A549 (cell line): ENCODE measurements at regions of chr1 and their contacts with region 1.

Region 1: DNA sequence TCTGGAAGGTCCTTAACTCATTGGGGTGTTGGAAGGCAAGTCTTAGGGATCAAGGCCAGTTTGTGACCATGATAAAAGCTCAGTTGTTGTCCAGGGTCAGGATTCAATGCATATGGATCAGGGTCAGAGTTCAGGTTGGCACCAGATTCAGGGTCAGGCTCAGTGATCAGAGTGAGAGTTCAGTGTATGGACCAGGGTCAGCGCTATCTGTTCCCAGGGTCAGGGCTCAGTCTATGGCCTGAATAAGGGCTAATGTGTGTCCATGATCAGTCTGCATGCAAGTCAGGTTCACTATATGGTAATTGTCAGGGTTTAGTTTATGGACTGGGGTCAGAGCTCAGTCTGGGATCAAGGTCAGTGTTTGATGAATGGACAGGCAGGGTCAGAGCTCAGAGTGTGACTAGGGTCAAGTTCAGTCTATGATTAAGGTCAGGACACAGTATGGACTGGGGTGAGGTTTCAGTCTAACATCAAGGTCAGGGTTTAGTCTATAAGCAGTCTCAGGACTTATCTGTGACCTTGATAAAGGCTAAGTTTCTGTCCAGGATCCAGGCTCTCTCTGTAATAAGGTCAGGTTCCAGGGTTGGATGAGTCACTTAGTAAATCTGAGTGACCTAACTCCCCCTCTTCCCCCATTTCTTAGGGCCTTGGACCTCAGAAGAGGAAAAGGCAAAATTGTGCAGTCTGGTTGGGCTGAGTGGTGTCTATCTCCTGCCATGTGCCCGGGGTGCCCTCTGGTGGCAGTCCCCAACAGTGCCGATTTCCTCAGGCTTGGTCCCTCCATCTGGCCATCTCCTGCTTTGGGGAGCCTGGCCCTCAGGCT is 23.8 kb downstream of the KNCN start:
- DNase-seq: peak; percentile 64 to 69
- ATAC-seq: peak; percentile 78 to 91
- H3K4me3 ChIP-seq: no peak overlapping the region
- H3K27ac ChIP-seq: peak overlapping the region in 1 of 2 experiments; percentile 68; a peak in 3 of 6 replicates
- H3K4me1 ChIP-seq: peaks cover 32% of the 10 kb centered on the region
- CTCF ChIP-seq: peak; percentile 85
- EP300 ChIP-seq: no peak
- POLR2A ChIP-seq: no peak
- RAD21 ChIP-seq: peak; percentile 97 to 98

Region 2: GRCh38 chr1:46442317-46443161 is 85.1 kb before region 1 on chr1:
- CTCF ChIA-PET with region 1: interaction called, 235 read pairs
- POLR2A ChIA-PET with region 1: no interaction called
- DNase-seq: peak; percentile 65 to 87
- ATAC-seq: peak; percentile 82 to 93
- H3K4me3 ChIP-seq: peak overlapping the region; percentile 26; the same call in 2 of the 3 replicates
- H3K27ac ChIP-seq: peak overlapping the region in 1 of 2 experiments; percentile 54; a peak in 2 of 6 replicates
- H3K4me1 ChIP-seq: no peaks in the 10 kb centered on the region
- CTCF ChIP-seq: peak; percentile 65
- EP300 ChIP-seq: no peak
- POLR2A ChIP-seq: no peak
- RAD21 ChIP-seq: peak; percentile 23 to 44; a peak in 3 of 5 replicates

Region 3: DNA sequence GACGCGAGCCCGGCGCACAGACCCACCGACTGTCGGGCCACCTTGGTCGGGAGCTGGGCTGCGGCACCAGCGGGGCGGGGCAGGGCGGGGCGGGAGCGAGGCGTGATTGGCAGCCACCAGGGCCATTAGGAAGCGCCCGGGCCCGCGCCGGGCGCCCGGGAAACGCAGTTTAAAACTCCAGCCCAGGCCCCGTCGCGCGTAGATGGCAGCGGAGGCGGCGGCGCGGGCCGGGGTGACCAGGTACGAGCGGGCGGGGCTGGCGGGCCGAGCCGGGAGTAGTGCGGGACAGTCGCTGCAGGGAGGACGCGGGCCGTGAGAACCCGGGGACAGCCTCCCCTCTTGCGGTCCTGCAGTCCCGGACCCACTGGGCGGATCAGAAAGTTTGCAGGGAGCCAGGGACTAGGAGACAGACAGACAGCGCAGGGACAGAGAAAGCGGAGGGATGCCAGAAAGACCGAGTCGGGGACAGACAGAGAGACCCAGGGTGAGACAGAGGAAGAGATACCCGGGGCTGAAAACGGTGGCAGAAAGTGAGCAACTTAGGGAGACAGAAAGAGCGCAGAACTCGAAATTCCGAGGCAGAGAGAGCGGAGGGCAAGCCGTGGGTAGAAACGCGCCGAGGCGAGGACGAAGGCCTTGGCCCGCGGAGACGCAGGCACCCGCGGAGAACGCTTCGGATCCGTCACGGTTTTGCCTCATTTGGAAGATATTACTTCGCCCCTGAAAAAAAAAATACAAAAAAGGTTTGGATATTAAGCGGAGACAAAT is 37.9 kb before region 1 on chr1 and contains the start of gene DMBX1:
- CTCF ChIA-PET with region 1: interaction called, 235 read pairs
- POLR2A ChIA-PET with region 1: no interaction called
- DNase-seq: peak; percentile 35 to 85
- ATAC-seq: peak; percentile 88 to 94
- H3K4me3 ChIP-seq: peak within 1 kb of the TSS; percentile 56
- H3K27ac ChIP-seq: peak within 1 kb of the TSS; percentile 62 to 85; a peak in 5 of 6 replicates
- H3K4me1 ChIP-seq: peaks cover 4% of the 10 kb centered on the region; the same call in 1 of the 3 replicates
- CTCF ChIP-seq: no peak
- EP300 ChIP-seq: no peak
- POLR2A ChIP-seq: no peak
- RAD21 ChIP-seq: no peak
- polyA plus RNA-seq, gene DMBX1: 0.40 and 0.44 TPM in 2 replicates

Region 4: DNA sequence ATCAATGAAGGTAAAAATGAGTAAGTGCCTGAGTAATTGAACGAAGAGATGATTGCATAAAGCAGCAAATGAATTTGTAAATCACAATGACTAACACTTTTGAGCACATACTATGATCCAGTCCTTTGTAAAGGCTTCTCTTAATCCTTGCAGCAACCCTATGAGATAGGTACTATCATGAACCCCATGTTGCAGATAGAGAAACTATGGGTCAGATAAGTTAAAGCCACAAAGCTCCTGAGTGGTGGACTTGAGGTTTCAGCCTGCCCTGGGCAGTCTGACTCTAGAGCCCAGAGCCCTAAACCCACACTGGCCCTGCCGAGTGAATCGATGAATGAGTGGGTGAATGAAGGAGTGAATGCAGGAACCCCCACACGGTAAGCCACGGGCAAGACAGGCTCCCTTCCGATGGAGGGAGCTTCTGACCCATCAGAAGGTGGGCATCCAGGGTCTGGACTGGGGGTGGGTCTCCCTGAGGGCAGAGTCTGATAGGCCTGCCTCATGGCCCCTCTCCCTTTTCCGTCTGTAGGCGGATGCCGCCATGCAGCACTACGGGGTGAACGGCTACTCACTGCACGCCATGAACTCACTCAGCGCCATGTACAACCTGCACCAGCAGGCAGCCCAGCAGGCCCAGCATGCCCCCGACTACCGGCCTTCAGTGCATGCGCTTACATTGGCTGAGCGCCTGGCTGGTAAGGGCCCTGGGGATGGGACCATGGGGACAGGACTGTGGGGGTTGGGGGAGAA is 21.0 kb before region 1 on chr1:
- CTCF ChIA-PET with region 1: interaction called, 17 read pairs
- POLR2A ChIA-PET with region 1: interaction called, 3 read pairs
- DNase-seq: no peak
- ATAC-seq: no peak
- H3K4me3 ChIP-seq: no peak overlapping the region
- H3K27ac ChIP-seq: no peak overlapping the region
- H3K4me1 ChIP-seq: peaks cover 8% of the 10 kb centered on the region; the same call in 1 of the 3 replicates
- CTCF ChIP-seq: no peak
- EP300 ChIP-seq: no peak
- POLR2A ChIP-seq: no peak
- RAD21 ChIP-seq: no peak

Region 5: GRCh38 chr1:46539972-46540371 is 12.3 kb after region 1 on chr1:
- CTCF ChIA-PET with region 1: interaction called, 110 read pairs
- POLR2A ChIA-PET with region 1: no interaction called
- DNase-seq: peak in 1 of 2 experiments; percentile 27
- ATAC-seq: peak; percentile 74
- H3K4me3 ChIP-seq: no peak overlapping the region
- H3K27ac ChIP-seq: 0 out of 6 replicates have a peak overlapping the region, but pooled peaks of 1 of the 2 experiments have one; percentile 52
- H3K4me1 ChIP-seq: peaks cover 3% of the 10 kb centered on the region; the same call in 1 of the 3 replicates
- CTCF ChIP-seq: no peak
- EP300 ChIP-seq: no peak
- POLR2A ChIP-seq: no peak
- RAD21 ChIP-seq: no peak

Region 6: DNA sequence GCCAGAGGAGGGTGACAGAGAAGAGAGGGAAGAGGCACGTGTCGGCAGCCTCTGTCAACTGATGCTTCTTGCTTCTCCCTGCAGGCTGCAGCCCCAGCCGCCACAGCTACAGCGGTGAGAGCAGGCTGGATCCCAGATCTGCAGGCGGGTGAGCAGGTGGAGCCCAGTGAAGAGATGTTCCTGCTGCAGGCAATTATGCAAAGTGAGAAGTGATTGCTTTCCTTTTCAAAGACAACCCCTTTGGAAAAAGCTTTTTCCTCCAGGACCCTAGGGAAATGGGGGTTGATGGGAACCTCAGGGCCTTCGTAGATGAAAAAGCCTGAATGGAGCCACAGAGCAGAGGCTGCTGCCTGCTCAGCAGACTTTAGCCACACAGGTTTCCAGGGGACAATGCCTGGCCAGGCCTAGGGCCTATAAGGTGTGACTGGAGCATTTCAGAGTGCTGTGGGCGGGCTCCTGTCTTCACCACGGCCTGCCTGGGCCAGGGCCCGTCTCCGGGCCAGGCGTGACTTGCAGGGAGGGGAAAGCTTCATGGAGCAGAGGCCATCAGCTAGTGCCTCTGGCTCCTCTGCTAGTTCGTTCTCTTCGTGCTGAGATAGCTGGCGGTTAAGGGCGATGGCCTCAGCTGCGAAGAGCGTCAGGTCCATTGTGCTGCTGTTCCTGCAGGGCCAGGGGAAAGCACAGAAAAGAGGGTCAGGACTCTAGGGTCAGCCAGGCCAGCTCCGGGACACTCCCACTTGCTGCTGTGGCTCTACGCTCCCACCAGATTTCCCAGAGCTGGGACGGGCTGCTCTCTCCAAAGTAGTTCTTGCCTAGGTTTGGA is 30.7 kb after region 1 on chr1:
- CTCF ChIA-PET with region 1: no interaction called
- POLR2A ChIA-PET with region 1: no interaction called
- DNase-seq: no peak
- ATAC-seq: no peak
- H3K4me3 ChIP-seq: no peak overlapping the region
- H3K27ac ChIP-seq: no peak overlapping the region
- H3K4me1 ChIP-seq: no peaks in the 10 kb centered on the region
- CTCF ChIP-seq: no peak
- EP300 ChIP-seq: no peak
- POLR2A ChIP-seq: no peak
- RAD21 ChIP-seq: no peak